ENCODE measurements at regions of chr18 and their contacts with region 1.

Region 1: GRCh38 chr18:75209129-75209950 is at the start of gene PTGR3:
- DNase-seq: peak; percentile 60 to 96 (median 70)

Region 2: DNA sequence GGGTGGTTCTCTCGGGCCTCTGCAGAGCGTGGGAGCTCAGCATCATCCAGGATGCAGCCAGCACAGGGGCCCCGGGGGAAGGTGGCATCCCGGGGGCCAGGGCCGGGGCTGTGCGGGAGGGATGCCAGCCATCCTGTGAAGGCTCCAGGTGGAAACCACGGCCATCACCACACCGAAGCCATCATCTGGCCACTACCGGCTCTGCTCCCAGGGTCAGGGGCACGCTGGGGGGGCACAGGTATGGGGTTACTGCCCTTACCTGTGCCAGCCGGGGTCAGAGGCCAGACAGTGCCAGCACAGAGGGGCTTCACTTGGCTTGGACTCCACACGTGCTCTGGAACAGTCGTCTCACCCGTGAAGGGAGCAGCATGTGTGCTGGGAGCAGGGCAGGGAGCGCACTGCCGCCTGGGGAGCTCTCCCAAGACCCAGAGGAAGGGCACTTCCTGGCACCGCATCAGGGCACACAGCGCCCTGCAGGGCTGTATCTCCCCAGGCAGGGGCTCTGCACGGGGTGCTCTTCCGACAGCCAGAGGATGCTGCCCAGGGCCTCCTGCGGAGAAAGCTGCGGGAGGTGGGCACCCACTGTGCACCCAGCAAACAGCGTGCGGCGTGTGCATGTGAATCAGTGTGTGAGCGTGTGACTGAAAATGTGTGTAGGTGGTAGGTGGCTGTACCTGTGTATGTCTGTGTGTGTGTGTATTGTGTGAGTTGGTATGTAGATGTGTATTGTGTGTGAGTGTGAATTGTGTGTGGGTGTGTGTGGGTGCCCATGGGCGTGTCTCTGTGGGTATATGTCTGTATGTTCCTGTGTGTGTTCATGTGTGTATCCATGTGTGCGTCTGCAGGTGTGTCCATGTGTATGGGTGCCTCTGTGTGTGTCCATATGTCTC is 75.4 kb before region 1 on chr18:
- intact Hi-C with region 1: no loop called
- DNase-seq: peak in 2 of 10 donors; percentile 51 to 77

Region 3: DNA sequence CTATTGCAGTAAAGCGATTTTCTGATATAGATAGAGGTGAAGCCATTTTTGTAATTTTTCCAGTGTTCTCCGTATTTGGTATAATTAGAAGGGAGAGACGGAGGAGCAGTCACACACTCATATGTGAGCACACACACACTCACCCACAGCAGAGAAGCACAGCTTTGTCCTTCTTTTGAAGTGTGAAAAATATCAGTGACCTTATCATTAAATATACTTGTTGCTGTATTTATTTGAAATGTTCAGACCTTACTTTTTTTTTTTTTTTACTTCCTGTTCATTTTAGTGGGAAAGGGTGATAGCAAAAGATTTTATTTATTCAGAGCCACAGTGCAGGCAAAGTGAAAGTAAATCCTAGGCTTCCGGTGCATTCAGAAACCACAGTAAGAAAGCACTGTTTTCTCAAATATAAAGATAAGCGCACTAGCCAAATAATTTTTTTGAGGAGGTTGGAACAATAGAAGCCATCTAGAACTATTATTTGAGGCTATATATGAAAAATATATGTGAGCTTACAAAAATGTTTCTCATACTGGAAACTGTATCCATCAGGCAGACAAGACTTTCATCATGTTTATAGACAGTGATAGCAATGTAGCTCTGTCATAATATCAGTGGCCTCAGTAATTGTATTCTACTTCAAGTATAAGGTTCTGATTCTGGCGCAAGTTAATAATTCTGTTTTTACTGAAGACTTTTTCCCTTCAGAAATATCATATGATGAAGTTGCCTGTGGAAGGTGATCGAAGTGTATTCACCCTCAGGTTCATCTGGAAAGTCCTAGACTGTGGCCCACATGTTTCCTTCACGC is 38.5 kb after region 1 on chr18:
- intact Hi-C with region 1: loop called (anchors 2 kb)
- DNase-seq: no peak

Measured in posterior cingulate gyrus (tissue), 11 donors.